CD8-positive, alpha-beta T cell (primary cell): ENCODE measurements at regions of chr2 and their contacts with region 1.

Region 1: DNA sequence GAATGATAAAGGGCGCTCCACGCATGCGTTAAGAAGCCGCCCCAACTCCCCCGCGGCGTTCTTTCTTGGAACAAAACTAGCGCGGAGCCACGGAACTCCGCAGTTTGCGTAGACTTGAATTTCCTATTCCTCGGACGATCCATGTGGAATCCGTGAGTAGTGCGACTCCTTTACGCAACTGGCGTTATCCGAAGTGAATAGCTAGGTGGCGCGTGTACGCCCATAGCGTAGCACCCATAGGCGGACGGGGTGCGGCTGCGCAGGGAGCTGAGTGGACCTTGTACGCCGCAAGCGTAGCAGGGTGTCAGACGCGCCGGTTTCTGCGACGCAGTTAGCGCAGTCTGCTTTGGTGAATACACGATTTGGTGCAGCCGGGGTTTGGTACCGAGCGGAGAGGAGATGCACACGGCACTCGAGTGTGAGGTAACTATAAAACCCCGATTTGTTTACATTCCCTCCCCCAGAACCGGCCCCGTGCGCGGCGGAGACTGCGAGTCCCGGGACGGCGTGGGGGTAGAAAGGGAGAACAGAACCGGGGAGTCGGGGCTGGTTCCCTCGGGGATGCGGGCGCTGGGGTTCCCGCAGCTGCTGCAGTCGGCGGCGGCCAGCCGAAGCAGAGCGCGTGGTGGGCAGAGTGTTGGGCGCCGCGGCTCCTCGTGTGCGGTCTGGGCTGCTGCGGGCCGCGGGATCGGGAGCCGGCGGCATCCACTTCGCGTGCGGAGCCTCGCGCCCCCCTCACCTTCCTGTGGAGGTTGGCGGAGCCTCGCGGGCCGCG is at the start of gene SLC39A10:
- DNase-seq: peak; percentile 94 to 100 (median 99)
- ATAC-seq: peak; percentile 83
- H3K4me3 ChIP-seq: peak within 1 kb of the TSS; percentile 57 to 96
- H3K4me3 Mint-ChIP-seq: peak within 1 kb of the TSS; percentile 96
- H3K27ac ChIP-seq: peak within 1 kb of the TSS; percentile 98
- H3K27ac Mint-ChIP-seq: peak within 1 kb of the TSS; percentile 100
- H3K4me1 ChIP-seq: peaks cover 12% of the 10 kb centered on the region
- H3K4me1 Mint-ChIP-seq: peaks cover 32% of the 10 kb centered on the region
- H3K27me3 ChIP-seq: no peaks in the 10 kb centered on the region
- H3K27me3 Mint-ChIP-seq: no peaks in the 10 kb centered on the region
- CTCF ChIP-seq: no peak
- total RNA-seq, gene SLC39A10: 35.0 to 36.3 TPM

Region 2: GRCh38 chr2:195488567-195488966 is 168.5 kb before region 1 on chr2:
- CTCF ChIA-PET with region 1: interaction called, 10 read pairs
- POLR2A ChIA-PET with region 1: interaction called, 5 read pairs
- intact Hi-C with region 1: no loop called
- DNase-seq: no peak
- ATAC-seq: no peak
- H3K4me3 ChIP-seq: no peak overlapping the region
- H3K4me3 Mint-ChIP-seq: no peak overlapping the region
- H3K27ac ChIP-seq: no peak overlapping the region
- H3K27ac Mint-ChIP-seq: no peak overlapping the region
- H3K4me1 ChIP-seq: peaks cover 13% of the 10 kb centered on the region
- H3K4me1 Mint-ChIP-seq: peaks cover 21% of the 10 kb centered on the region
- H3K27me3 ChIP-seq: no peaks in the 10 kb centered on the region
- H3K27me3 Mint-ChIP-seq: no peaks in the 10 kb centered on the region
- CTCF ChIP-seq: no peak

Region 3: DNA sequence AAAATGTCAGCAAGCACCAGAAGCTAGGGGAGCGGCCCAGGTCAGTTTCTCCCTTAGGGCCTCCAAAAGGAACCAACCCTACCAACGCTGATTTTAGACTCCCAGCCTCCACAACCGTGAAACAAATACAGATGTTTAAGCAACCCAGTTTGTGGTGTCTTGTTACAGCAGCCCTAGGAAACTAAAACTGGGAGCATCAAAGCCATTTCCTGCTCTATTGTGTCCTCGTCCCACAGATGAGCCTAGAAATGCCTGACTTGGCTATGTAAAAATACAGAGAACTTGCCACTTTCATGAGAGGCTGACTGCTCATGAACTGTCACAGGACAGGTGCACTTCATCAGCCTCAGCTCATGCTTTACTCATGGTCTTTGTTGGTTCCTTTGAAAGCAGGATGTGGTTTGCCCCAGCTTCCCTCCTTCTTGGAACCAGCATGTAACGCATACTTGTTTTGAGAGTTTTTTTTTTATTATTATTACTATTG is 97.6 kb before region 1 on chr2:
- CTCF ChIA-PET with region 1: interaction called, 12 read pairs
- POLR2A ChIA-PET with region 1: interaction called, 58 read pairs
- intact Hi-C with region 1: loop called (anchors 1 to 2 kb)
- DNase-seq: peak; percentile 42 to 93 (median 73)
- ATAC-seq: peak; percentile 87
- H3K4me3 ChIP-seq: peak overlapping the region in 1 of 2 experiments; percentile 17
- H3K4me3 Mint-ChIP-seq: peak overlapping the region; percentile 42
- H3K27ac ChIP-seq: peak overlapping the region; percentile 63 to 75
- H3K27ac Mint-ChIP-seq: peak overlapping the region; percentile 89
- H3K4me1 ChIP-seq: peaks cover 66% of the 10 kb centered on the region
- H3K4me1 Mint-ChIP-seq: peaks cover 69% of the 10 kb centered on the region
- H3K27me3 ChIP-seq: no peaks in the 10 kb centered on the region
- H3K27me3 Mint-ChIP-seq: no peaks in the 10 kb centered on the region
- CTCF ChIP-seq: no peak

Region 4: GRCh38 chr2:196068271-196069209 is 411.5 kb after region 1 on chr2 and contains the start of gene DNAH7:
- CTCF ChIA-PET with region 1: interaction called, 13 read pairs
- POLR2A ChIA-PET with region 1: no interaction called
- intact Hi-C with region 1: no loop called
- DNase-seq: peak; percentile 79 to 97 (median 92)
- ATAC-seq: peak; percentile 94
- H3K4me3 ChIP-seq: peak within 1 kb of the TSS; percentile 62
- H3K4me3 Mint-ChIP-seq: peak within 1 kb of the TSS; percentile 83
- H3K27ac ChIP-seq: peak within 1 kb of the TSS; percentile 41 to 60
- H3K27ac Mint-ChIP-seq: peak within 1 kb of the TSS; percentile 81
- H3K4me1 ChIP-seq: peaks cover 9% of the 10 kb centered on the region
- H3K4me1 Mint-ChIP-seq: peaks cover 20% of the 10 kb centered on the region
- H3K27me3 ChIP-seq: no peaks in the 10 kb centered on the region
- H3K27me3 Mint-ChIP-seq: peaks cover under 1% of the 10 kb centered on the region
- CTCF ChIP-seq: peak; percentile 47
- total RNA-seq, gene DNAH7: not detected

Region 5: DNA sequence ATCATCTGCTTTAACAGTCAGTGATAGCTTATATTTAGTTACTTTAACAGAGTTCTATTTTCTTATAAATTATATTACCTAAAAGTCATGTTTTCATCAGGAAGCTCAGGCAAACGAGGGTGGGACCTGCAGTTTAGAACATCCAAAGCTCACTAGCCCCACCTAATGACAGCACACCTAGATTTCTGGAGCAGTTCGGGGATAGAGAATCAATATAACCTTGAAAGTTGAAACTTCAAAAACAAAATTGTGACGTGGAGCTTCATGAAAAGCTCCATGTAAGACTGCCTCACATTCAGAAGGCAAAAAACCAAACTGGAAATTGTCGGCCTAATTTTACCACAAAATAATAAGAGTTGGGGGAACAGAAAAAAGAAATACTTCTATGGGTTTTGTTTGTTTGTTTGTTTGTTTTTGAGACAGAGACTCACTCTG is 796.6 kb after region 1 on chr2:
- CTCF ChIA-PET with region 1: no interaction called
- POLR2A ChIA-PET with region 1: no interaction called
- intact Hi-C with region 1: loop called in 1 of 2 experiments (anchors 10 kb)
- DNase-seq: peak in 6 of 9 experiments; percentile 3 to 64 (median 31)
- ATAC-seq: no peak
- H3K4me3 ChIP-seq: no peak overlapping the region
- H3K4me3 Mint-ChIP-seq: no peak overlapping the region
- H3K27ac ChIP-seq: no peak overlapping the region
- H3K27ac Mint-ChIP-seq: no peak overlapping the region
- H3K4me1 ChIP-seq: no peaks in the 10 kb centered on the region
- H3K4me1 Mint-ChIP-seq: peaks cover 2% of the 10 kb centered on the region
- H3K27me3 ChIP-seq: peaks cover 0 to 7% of the 10 kb centered on the region in 2 experiments
- H3K27me3 Mint-ChIP-seq: peaks cover 21% of the 10 kb centered on the region
- CTCF ChIP-seq: no peak

Region 6: GRCh38 chr2:197124639-197125390 is 1467.8 kb after region 1 on chr2:
- CTCF ChIA-PET with region 1: no interaction called
- POLR2A ChIA-PET with region 1: no interaction called
- intact Hi-C with region 1: no loop called
- DNase-seq: no peak
- ATAC-seq: no peak
- H3K4me3 ChIP-seq: no peak overlapping the region
- H3K4me3 Mint-ChIP-seq: no peak overlapping the region
- H3K27ac ChIP-seq: no peak overlapping the region
- H3K27ac Mint-ChIP-seq: peak overlapping the region; percentile 77
- H3K4me1 ChIP-seq: peaks cover 28% of the 10 kb centered on the region
- H3K4me1 Mint-ChIP-seq: peaks cover 62% of the 10 kb centered on the region
- H3K27me3 ChIP-seq: no peaks in the 10 kb centered on the region
- H3K27me3 Mint-ChIP-seq: no peaks in the 10 kb centered on the region
- CTCF ChIP-seq: no peak